Activated T-helper 2 cell treated with anti-CD3 and anti-CD28 coated beads, Interferon-gamma antibody, Interleukin-2, Interleukin-4, amounts not matched to agents 10 μg/mL and 5 μg/mL and 100 μg/mL, durations not matched to agents 14 hours and 24 hours and 36 hours (primary cell): ENCODE measurements at regions of chr2 and their contacts with region 1.

Region 1: GRCh38 chr2:219229305-219230058 is at the starts of genes ANKZF1 and ATG9A:
- DNase-seq: peak; percentile 99
- H3K4me3 Mint-ChIP-seq: peak within 1 kb of the TSS; percentile 97
- H3K27ac Mint-ChIP-seq: peak within 1 kb of the TSS; percentile 99
- H3K4me1 Mint-ChIP-seq: peaks cover 33% of the 10 kb centered on the region
- H3K27me3 Mint-ChIP-seq: no peaks in the 10 kb centered on the region
- total RNA-seq, gene ANKZF1: 133 and 142 TPM in 2 replicates
- total RNA-seq, gene ATG9A: 53.1 and 60.5 TPM in 2 replicates

Region 2: DNA sequence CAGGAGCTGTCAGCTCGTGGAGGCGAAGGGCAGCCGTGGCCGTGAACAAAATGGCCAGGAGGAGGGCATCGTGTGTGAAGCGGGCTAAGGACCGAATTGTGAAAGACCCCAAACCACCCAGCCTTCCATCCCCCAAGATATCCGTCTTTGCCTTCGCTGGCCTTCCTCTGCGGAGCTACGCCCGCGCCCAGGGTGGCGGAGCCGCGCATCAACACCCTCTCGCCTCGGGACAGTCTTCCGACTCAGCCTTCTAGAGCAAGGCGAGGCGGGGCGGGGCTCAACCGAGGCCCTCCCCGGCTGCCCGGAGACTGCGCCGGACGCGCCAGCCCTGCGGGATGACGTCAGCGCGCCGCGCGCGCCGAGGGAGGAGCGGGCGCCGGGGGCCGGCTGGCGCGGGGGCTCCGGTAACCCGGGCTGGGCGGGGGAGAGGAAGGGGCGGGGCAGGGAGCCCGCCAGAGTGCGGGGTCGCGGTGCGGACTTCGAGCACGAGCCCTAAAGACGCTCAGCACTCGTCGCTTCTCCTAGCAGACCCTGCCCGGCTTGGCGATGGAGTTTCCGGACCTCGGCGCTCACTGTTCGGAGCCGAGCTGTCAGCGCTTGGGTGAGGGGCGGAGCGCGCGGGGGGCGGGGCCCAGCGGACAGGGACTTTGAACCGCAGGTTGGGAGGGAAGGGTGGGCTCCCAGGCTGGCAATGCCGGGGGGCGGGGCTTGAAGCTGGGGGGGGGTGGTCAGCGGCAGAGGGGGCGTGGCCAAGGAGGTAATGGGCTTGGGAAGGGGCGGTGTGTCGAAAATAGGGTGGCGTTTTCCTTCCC is 22.8 kb before region 1 on chr2 and contains the start of gene ZFAND2B:
- intact Hi-C with region 1: loop called (anchors 1 kb)
- DNase-seq: peak; percentile 94
- H3K4me3 Mint-ChIP-seq: peak within 1 kb of the TSS; percentile 84
- H3K27ac Mint-ChIP-seq: peak within 1 kb of the TSS; percentile 90
- H3K4me1 Mint-ChIP-seq: peaks cover 38% of the 10 kb centered on the region
- H3K27me3 Mint-ChIP-seq: no peaks in the 10 kb centered on the region
- total RNA-seq, gene ZFAND2B: 27.3 and 33.5 TPM in 2 replicates

Region 3: DNA sequence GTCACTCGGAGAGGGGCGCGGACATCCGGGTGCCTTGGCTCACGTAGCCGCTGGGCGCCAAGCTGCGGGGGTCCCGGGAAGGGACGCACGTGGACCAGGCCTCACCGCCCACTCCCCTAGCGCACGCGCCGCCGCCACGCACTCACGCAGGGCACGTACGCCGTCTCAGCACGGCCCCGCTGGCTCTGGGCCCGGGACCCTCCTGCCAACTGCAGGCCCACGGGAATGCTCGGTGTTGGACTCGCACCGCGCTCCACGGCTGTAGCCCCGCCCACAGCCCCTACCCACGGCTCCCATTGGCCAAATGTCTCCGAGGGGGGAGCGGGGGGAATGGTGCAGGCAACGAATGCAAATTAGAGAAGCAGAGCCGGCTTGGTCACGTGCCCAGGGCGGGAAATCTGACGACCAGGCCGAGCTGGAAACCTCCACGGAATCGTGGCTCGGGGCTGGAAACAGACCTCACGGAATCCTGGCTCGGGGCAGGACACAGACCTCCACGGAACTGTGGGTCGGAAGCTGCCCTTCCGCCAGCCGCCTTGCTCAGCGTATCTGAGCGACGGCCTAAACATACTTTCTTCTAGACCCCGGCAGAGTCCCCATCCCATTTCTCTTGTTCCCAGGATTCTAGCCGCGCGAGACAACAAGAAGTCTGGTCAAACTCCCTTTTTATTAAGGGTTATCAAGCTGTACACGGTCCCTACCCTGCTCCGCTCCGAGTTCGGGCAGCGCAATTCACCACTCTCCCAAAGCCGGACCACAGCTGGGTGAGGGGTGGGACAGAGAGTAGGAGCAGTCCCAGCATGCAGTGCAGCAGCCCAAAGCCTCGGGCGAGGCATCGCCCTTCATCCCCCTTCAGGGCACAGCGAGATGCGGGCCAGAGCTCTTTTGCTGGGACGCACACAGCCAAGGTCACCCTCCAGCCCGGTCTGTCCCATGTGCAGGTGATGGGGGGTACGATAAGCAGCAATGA is 10.5 kb before region 1 on chr2 and contains the start of gene ABCB6:
- intact Hi-C with region 1: loop called (anchors 1 kb)
- DNase-seq: peak; percentile 81
- H3K4me3 Mint-ChIP-seq: peak within 1 kb of the TSS; percentile 82
- H3K27ac Mint-ChIP-seq: peak within 1 kb of the TSS; percentile 55
- H3K4me1 Mint-ChIP-seq: peaks cover 22% of the 10 kb centered on the region
- H3K27me3 Mint-ChIP-seq: no peaks in the 10 kb centered on the region
- total RNA-seq, gene ABCB6: 22.1 and 25.4 TPM in 2 replicates

Region 4: DNA sequence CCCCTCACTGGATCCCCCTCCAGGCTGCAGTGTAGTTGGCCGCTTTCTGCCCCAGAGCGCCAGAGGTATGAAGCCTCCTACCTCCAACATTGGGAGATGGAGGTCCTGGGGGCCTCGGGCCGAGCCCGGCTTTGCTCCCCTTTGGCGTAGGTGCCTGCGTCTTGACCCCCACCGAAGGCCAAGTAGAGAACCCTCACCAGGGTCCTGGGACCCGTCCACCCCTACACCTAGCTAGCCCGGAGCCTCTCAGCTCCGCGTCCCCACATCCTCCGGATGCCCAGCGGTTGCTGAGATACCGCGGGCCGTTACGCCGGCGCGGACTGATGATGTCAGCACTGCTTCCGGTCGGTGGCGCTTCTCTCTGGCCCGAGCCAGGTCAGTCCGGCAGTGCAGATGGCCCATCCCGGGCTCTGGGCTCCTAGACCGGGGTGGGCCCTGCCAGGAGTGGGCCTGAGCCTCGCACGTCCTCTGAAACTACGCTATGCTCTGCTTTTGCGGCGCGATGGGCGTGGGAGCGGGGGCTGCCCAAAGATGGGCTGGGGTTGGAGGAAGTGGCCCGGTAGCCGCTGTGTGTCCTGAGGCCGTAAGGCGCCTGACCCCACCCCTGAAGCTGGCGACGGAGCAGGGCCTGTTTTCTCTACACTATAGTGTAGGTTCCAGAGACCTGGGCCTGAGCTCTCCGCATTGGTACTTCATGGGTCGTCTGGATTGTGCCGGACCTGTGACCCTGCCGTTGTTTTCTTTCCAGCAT is 15.8 kb after region 1 on chr2 and contains the starts of genes GLB1L and STK16:
- intact Hi-C with region 1: loop called (anchors 1 kb)
- DNase-seq: peak; percentile 88
- H3K4me3 Mint-ChIP-seq: peak within 1 kb of the TSS; percentile 96
- H3K27ac Mint-ChIP-seq: peak within 1 kb of the TSS; percentile 97
- H3K4me1 Mint-ChIP-seq: peaks cover 50% of the 10 kb centered on the region
- H3K27me3 Mint-ChIP-seq: no peaks in the 10 kb centered on the region
- total RNA-seq, gene GLB1L: 4.2 and 4.4 TPM in 2 replicates
- total RNA-seq, gene STK16: 32.0 and 33.3 TPM in 2 replicates

Region 5: GRCh38 chr2:219253753-219254590 is 24.5 kb after region 1 on chr2 and contains the start of gene TUBA4A:
- intact Hi-C with region 1: loop called (anchors 1 kb)
- DNase-seq: peak; percentile 84
- H3K4me3 Mint-ChIP-seq: peak within 1 kb of the TSS; percentile 77
- H3K27ac Mint-ChIP-seq: peak within 1 kb of the TSS; percentile 92
- H3K4me1 Mint-ChIP-seq: peaks cover 46% of the 10 kb centered on the region
- H3K27me3 Mint-ChIP-seq: no peaks in the 10 kb centered on the region
- total RNA-seq, gene TUBA4A: 220 and 231 TPM in 2 replicates

Region 6: DNA sequence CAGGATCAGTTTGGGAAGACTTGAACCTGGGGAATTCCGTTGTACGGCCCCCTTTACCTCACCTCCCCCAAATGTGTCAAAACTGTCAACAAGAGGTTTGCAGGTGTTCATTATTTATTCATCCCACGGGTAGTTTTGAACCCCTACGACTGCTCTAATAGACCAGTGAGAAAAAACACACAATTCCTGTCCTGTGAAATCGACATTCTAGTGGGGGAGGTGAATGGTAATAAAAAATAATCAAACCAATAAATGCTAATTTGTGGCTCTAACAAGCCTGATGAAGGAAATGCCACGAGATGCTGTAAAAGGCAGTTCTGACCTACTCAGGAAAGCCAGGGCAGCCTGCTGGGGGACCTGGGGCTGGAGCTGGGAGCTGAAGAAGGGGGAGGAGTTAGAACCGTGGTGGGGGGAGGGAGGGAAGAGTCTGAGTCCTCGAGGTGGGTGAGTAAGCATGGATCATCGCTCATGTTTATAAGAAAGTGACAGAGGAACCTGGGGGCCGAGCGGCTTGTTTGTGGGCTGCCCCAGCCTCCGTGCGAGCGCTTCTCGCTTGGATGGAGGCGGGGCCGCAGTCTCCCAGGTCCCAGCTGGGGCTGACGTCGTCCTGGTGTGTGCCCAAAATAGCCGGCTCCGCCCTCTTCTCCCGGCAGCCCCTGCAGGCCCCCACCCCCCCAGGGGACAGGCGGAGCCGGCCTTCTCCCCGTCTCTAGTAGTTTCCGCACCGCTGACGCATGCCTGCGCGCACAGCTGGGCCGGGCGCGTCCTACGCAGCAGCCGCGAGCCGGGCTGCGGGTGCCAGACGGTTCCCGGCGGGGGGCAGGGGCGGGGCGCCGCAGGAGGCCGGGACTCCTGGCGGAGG is 49.4 kb after region 1 on chr2 and contains the start of gene DNAJB2:
- intact Hi-C with region 1: loop called (anchors 1 kb)
- DNase-seq: peak; percentile 98
- H3K4me3 Mint-ChIP-seq: peak within 1 kb of the TSS; percentile 85
- H3K27ac Mint-ChIP-seq: peak within 1 kb of the TSS; percentile 91
- H3K4me1 Mint-ChIP-seq: peaks cover 39% of the 10 kb centered on the region
- H3K27me3 Mint-ChIP-seq: peaks cover 3% of the 10 kb centered on the region
- total RNA-seq, gene DNAJB2: 49.8 and 55.6 TPM in 2 replicates

Region 7: DNA sequence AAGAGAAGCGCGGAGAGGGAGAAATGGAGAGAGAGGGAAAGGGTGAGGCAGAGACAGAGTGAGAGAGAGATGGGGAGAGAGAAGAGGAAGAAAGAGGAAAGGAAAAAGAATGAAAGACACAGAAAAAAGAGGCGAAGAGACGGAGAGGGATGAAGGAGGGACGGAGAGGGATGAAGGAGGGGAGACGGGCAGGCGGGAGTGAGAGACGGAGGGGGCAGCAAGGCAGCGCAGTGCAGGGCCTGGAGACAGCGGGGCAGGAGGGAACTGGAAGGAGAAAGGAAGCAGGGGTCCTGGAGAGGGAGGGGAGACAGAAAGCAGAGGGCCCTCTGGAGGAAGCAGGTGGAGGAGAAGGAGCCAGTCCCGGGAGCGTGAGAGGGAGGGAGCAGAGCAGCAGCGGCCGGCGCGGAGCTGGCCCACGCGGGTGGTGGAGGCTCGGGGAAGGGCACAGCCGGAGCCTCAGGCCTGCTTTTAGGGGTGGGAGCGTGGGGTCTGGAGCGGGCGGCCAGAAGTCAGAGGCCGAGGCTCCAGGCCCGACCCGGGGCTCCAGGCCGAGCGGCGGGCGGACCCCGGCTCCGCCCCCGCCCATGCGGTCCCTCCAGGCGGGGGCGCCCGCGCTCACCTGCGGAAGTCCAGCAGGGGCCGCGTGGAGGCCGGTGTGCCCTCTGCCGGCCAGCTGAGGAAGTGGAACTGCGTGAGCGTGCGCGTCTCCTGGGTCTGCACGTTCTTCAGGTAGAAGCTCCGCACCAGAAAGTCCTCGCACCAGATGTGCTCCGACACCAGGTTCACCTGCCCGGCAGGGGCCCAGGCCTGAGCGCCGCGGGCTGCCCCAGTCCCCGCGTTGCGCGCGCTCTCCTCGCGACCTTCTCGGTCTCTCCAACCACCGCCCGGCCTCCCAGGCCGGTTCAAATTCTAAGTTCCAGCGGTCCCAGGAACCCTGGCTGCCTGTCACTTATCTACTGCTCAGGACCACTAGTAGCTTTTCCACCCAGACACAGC is 65.2 kb after region 1 on chr2:
- intact Hi-C with region 1: loop called (anchors 1 kb)
- DNase-seq: peak; percentile 85
- H3K4me3 Mint-ChIP-seq: peak overlapping the region; percentile 79
- H3K27ac Mint-ChIP-seq: peak overlapping the region; percentile 87
- H3K4me1 Mint-ChIP-seq: peaks cover 11% of the 10 kb centered on the region
- H3K27me3 Mint-ChIP-seq: peaks cover 1% of the 10 kb centered on the region